T-cell (primary cell): ENCODE measurements at regions of chr17 and their contacts with region 1.

Region 1: DNA sequence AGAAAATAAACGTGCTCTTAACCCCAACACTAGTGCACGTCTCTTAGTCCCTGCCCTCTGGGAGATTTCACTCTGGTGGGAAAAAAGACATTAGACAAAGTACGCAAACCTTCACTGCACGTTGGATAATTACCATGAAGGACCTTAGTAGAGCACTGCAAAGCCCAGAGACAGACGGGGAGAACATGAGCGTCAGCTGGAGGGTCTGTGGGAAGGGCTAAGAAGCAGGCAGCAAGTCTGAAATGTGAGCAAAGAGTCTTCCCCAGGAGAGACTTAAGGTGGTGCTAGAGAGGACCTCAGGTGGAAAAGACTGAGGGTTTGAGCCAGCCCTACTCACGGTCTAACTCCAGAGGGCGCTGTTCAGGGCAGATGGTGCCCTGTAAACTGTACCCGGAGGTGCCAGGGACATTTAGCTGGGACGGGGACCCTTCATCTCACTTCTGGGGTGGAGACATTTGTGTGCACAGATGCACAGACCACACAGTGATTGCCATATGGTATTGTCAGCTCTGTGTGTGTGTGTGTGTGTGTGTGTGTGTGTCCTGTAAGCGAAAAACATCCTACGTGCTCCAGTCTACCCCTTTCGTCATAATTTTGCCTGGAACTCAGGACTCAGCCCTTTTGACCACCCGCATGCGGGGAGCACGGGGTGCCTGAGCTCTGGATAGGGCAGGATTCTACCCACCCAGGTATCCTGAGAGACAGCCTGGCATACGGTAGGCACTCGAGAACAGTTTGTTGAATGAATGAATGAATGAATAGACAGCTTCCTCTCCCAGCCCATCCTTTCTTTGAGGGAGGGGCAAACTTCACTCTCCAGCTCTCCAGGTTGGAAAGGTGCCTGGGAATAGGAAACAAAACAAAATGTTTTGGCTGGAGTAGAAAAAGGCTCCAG is 10.1 kb upstream of the STAC2 start:
- DNase-seq: peak in 30 of 35 experiments; percentile 16 to 74 (median 36)
- ATAC-seq: peak in 2 of 4 experiments; percentile 6 to 27
- H3K4me3 ChIP-seq: no peak overlapping the region
- H3K4me3 Mint-ChIP-seq: no peak overlapping the region
- H3K27ac ChIP-seq: peak overlapping the region; percentile 29
- H3K27ac Mint-ChIP-seq: peak overlapping the region; percentile 1 to 61
- H3K4me1 ChIP-seq: peaks cover 0 to 62% of the 10 kb centered on the region in 2 experiments
- H3K4me1 Mint-ChIP-seq: peaks cover 40 to 45% (median 44%) of the 10 kb centered on the region in 3 donors
- H3K27me3 ChIP-seq: peaks cover 0 to 22% of the 10 kb centered on the region in 2 experiments
- H3K27me3 Mint-ChIP-seq: peaks cover 0 to 13% of the 10 kb centered on the region in 2 donors

Region 2: DNA sequence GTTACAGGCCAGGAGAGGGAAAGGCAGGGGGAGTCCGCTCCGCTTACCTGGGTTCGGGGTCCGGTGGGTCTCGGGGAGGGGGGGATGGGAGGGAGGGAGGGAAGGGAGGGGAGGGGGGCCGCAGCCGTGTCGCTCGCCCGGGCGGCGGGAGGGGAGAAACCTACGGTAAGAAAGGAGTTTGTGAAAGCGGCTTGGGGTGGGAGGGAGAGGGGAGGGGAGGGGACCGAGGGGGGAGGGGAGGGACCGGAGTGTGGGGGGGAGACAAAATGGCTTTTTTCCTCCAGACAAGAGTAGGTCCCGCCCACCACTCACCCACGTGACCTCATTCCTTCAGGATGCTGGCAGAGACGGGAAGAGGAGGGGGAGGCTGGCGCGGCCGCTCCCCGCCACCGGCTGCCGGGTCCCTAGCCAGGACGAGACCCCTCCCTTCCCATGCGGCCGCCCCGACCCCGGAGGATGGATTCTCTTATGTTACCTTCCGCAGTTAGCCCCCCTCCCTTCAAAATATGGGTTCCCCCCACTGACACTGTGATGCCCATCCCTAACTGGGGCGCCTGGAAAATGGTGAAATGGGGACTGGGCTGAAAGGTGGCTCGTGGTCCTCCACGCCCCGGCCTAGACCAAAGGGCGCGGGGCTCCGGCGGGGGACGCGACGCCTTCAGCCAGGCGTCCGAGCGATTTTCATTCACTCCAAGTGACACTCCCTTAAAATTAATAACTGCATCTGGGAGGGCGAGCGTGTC is 487.5 kb before region 1 on chr17 and contains the start of gene PCGF2:
- CTCF ChIA-PET with region 1: no interaction called
- POLR2A ChIA-PET with region 1: no interaction called
- DNase-seq: no peak
- ATAC-seq: no peak
- H3K4me3 ChIP-seq: peak within 1 kb of the TSS; percentile 38 to 72
- H3K4me3 Mint-ChIP-seq: peak within 1 kb of the TSS; percentile 64 to 88 (median 72)
- H3K27ac ChIP-seq: no peak within 1 kb of the TSS
- H3K27ac Mint-ChIP-seq: no peak within 1 kb of the TSS
- H3K4me1 ChIP-seq: peaks cover 36 to 68% of the 10 kb centered on the region in 2 experiments
- H3K4me1 Mint-ChIP-seq: peaks cover 49 to 51% (median 49%) of the 10 kb centered on the region in 3 donors
- H3K27me3 ChIP-seq: peaks cover 4 to 70% of the 10 kb centered on the region in 2 experiments
- H3K27me3 Mint-ChIP-seq: peaks cover 21 to 63% of the 10 kb centered on the region in 2 donors
- total RNA-seq, gene PCGF2: 0.28 to 0.69 (median 0.53) TPM in 3 of 5 donors, not detected in the others

Region 3: GRCh38 chr17:39199820-39200069 is 36.1 kb before region 1 on chr17:
- CTCF ChIA-PET with region 1: interaction called, 9 to 48 read pairs
- POLR2A ChIA-PET with region 1: interaction called, 3 to 11 read pairs
- DNase-seq: peak in 34 of 35 experiments; percentile 68 to 94 (median 82)
- ATAC-seq: peak; percentile 63 to 74 (median 68)
- H3K4me3 ChIP-seq: peak overlapping the region; percentile 74 to 77
- H3K4me3 Mint-ChIP-seq: peak overlapping the region; percentile 91 to 99 (median 98)
- H3K27ac ChIP-seq: peak overlapping the region; percentile 99
- H3K27ac Mint-ChIP-seq: peak overlapping the region; percentile 100
- H3K4me1 ChIP-seq: peaks cover 20 to 72% of the 10 kb centered on the region in 2 experiments
- H3K4me1 Mint-ChIP-seq: peaks cover 53 to 66% (median 62%) of the 10 kb centered on the region in 3 donors
- H3K27me3 ChIP-seq: no peaks in the 10 kb centered on the region
- H3K27me3 Mint-ChIP-seq: no peaks in the 10 kb centered on the region

Region 4: DNA sequence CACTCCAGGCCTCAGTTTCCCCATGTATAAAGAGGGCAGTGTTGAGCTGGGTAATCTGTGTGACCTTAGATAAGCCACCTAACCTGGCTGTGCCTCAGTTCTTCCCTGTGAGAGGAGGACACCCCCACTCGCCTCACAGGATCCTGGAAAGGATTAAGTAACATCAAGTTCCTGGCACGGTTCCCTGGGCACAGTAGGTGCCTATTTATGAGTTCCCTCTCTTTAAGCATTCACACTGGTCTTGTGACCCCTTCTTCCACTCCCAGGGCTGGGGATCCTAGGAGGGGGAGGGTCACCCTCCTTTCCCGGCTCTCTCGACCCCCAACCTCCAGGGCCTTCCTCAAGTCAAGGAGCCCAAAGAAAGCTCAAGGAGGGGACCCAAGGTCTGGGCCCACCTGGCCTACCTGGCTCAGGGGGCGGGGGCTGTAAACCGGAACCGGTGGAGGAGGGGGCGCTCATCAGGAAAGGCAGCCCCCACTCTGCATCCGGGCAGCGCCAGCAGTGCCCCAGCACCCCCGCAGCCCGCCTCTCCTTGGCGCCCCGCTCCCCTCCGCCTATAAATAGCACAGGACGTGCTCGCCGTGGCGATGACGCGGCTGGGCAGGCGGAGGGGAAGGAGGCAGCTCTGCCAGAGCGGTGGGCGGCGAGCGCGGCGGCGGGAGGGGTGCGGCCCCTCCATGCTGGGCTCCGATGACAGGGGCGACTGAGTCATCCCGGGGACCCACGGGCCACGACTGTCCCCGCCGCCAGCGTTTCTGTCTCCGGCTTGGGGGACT is 26.3 kb before region 1 on chr17:
- CTCF ChIA-PET with region 1: interaction called, 5 to 48 read pairs
- POLR2A ChIA-PET with region 1: interaction called in 1 of 2 experiments, 9 read pairs
- DNase-seq: peak; percentile 34 to 75 (median 61)
- ATAC-seq: peak; percentile 68 to 76 (median 74)
- H3K4me3 ChIP-seq: peak overlapping the region; percentile 53 to 59
- H3K4me3 Mint-ChIP-seq: peak overlapping the region in 2 of 3 donors; percentile 37 to 67
- H3K27ac ChIP-seq: peak overlapping the region; percentile 71
- H3K27ac Mint-ChIP-seq: peak overlapping the region; percentile 28 to 39
- H3K4me1 ChIP-seq: peaks cover 11 to 34% of the 10 kb centered on the region in 2 experiments
- H3K4me1 Mint-ChIP-seq: peaks cover 26 to 37% (median 27%) of the 10 kb centered on the region in 3 donors
- H3K27me3 ChIP-seq: peaks cover 0 to 32% of the 10 kb centered on the region in 2 experiments
- H3K27me3 Mint-ChIP-seq: peaks cover 0 to 11% of the 10 kb centered on the region in 2 donors